ENCODE measurements at regions of chr6 and their contacts with region 1.

Region 1: DNA sequence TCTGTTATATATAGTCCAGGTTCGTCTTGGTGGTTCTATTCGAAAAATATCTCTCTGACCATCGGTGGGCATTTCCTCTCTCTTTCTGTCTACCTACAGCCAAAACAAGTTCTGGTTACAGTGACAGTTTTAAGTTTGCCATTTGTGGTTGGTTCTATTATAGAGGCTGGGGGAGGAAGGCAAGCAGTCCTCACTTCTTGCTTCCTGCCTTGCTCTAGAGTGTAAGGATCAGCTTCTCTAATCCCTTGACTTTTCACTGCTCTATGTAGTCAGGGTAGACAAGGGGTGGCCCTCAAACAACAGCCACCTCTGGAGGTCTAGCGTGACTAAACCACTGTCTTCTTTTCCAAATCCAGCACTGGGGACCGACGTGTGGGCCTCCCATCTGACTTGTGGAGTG is 16.1 kb downstream of the E2F3 start:
- DNase-seq: no peak
- H3K4me3 Mint-ChIP-seq: no peak overlapping the region
- H3K27ac Mint-ChIP-seq: no peak overlapping the region
- H3K4me1 Mint-ChIP-seq: peaks cover 40% of the 10 kb centered on the region
- H3K27me3 Mint-ChIP-seq: no peaks in the 10 kb centered on the region
- CTCF ChIP-seq: no peak

Region 2: GRCh38 chr6:20302702-20303251 is 115.0 kb before region 1 on chr6:
- CTCF ChIA-PET with region 1: no interaction called
- intact Hi-C with region 1: no loop called
- DNase-seq: no peak
- H3K4me3 Mint-ChIP-seq: no peak overlapping the region
- H3K27ac Mint-ChIP-seq: no peak overlapping the region
- H3K4me1 Mint-ChIP-seq: no peaks in the 10 kb centered on the region
- H3K27me3 Mint-ChIP-seq: no peaks in the 10 kb centered on the region
- CTCF ChIP-seq: no peak

Region 3: GRCh38 chr6:20366091-20366832 is 51.6 kb before region 1 on chr6:
- CTCF ChIA-PET with region 1: no interaction called
- intact Hi-C with region 1: no loop called
- DNase-seq: no peak
- H3K4me3 Mint-ChIP-seq: no peak overlapping the region
- H3K27ac Mint-ChIP-seq: no peak overlapping the region
- H3K4me1 Mint-ChIP-seq: no peaks in the 10 kb centered on the region
- H3K27me3 Mint-ChIP-seq: no peaks in the 10 kb centered on the region
- CTCF ChIP-seq: no peak

Region 4: DNA sequence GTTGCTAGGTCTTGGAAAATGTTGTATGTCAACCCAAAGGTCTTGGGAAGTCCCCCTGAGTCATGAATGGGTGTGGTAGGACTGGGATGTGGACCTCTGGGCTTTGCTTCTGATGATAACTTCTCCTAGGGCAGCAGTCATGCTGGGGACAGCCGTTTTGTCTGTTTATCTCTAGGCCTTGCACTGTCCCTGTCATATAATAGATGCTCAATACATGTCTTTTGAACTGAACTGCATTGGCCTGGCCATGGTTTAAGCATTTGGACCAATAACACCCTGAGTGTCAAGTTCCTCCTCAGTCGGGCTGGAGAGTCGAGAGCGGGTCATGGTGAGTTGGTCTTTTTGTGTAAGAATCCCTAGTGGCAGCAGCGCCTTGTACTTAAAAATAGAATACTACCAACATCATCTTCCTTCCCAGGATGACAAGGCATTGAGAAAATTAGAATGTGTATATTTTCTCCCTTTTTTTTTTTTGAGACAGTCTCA is 27.0 kb after region 1 on chr6:
- CTCF ChIA-PET with region 1: no interaction called
- intact Hi-C with region 1: no loop called
- DNase-seq: peak; percentile 23
- H3K4me3 Mint-ChIP-seq: no peak overlapping the region
- H3K27ac Mint-ChIP-seq: peak overlapping the region; percentile 6
- H3K4me1 Mint-ChIP-seq: peaks cover 29% of the 10 kb centered on the region
- H3K27me3 Mint-ChIP-seq: no peaks in the 10 kb centered on the region
- CTCF ChIP-seq: no peak

Region 5: GRCh38 chr6:20534295-20535262 is 116.8 kb after region 1 on chr6 and contains the start of gene CDKAL1:
- CTCF ChIA-PET with region 1: no interaction called
- intact Hi-C with region 1: loop called (anchors 5 kb)
- DNase-seq: peak; percentile 94
- H3K4me3 Mint-ChIP-seq: peak within 1 kb of the TSS; percentile 84
- H3K27ac Mint-ChIP-seq: peak within 1 kb of the TSS; percentile 87
- H3K4me1 Mint-ChIP-seq: peaks cover 35% of the 10 kb centered on the region
- H3K27me3 Mint-ChIP-seq: no peaks in the 10 kb centered on the region
- CTCF ChIP-seq: no peak
- total RNA-seq, gene CDKAL1: 37.8 and 39.6 TPM in 2 replicates